HEK293 (cell line): ENCODE measurements at regions of chr2 and their contacts with region 1.

Region 1: DNA sequence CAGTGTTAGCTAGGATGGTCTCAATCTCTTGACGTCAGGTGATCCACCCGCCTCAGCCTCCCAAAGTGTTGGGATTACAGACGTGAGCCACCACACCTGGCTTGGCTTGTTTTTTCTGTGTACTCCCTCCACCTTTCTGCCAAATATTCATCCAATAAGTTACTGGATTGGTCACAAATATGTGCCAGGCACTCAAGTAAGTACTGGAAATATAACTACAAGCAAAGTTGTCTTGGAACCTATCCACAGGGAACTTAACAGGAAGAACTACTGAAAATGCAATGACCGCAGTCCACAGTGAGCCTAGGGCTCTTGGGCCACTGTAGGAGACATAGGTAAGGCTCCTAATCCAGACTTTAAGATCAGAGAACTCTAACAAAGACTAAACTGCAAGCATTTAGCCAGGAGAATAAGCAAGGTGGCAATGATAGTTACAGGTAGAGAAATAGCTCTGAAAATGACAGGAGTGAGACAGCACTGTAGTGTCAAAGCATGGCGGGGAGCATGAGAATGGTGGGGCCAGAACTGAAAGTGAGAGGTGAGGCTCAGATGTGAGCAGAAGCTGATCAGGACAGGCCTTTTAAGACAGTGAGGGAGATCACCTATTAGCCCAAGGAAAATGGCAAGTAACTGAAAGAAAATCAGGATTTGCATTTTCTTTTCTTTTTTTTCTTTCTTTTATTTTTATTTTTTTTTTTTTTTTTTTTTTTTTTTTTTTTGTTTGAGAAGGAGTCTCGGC is 252.1 kb downstream of the RBM43 start:
- H3K4me3 ChIP-seq: no peak overlapping the region
- H3K27ac ChIP-seq: no peak overlapping the region
- H3K4me1 ChIP-seq: no peaks in the 10 kb centered on the region
- CTCF ChIP-seq: no peak

Region 2: GRCh38 chr2:150985741-150986140 is 23.9 kb before region 1 on chr2:
- CTCF ChIA-PET with region 1: no interaction called
- POLR2A ChIA-PET with region 1: interaction called, 13 read pairs
- H3K4me3 ChIP-seq: no peak overlapping the region
- H3K27ac ChIP-seq: no peak overlapping the region
- H3K4me1 ChIP-seq: no peaks in the 10 kb centered on the region
- CTCF ChIP-seq: no peak

Region 3: DNA sequence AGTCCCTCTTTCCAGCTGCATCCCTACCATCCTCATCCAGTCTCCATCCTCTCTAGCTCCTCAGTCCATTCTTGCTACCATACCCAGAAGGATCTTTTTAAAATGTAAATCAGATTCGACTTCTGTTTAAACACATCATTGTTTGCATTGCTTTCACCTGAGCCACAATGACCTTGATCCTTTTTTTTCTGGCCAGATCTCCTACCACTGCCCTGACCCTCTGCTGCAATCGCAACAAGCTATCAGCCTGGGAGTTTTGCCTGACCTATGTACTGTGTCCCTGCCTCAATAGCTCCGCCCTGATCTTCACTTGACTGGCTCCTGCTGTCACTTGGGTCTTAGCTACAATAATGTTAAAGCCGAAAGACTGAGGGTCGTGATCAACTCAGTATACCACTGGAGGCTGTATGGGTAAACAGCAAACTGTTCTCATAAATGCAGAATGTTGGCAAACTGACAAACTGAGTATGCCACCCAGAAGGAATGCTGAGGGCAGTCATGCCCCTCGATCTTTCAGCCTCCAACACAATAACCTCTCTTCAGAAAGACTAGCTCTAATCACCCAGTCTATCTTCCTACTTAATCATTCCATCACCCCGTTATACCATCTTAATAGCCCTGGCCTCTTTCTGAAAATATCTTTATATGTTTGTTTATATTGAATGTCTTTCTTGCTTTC is 254.7 kb after region 1 on chr2:
- CTCF ChIA-PET with region 1: no interaction called
- POLR2A ChIA-PET with region 1: no interaction called
- H3K4me3 ChIP-seq: no peak overlapping the region
- H3K27ac ChIP-seq: no peak overlapping the region
- H3K4me1 ChIP-seq: no peaks in the 10 kb centered on the region
- CTCF ChIP-seq: no peak